Testis (tissue), 5 donors: ENCODE measurements at regions of chr2 and their contacts with region 1.

Region 1: DNA sequence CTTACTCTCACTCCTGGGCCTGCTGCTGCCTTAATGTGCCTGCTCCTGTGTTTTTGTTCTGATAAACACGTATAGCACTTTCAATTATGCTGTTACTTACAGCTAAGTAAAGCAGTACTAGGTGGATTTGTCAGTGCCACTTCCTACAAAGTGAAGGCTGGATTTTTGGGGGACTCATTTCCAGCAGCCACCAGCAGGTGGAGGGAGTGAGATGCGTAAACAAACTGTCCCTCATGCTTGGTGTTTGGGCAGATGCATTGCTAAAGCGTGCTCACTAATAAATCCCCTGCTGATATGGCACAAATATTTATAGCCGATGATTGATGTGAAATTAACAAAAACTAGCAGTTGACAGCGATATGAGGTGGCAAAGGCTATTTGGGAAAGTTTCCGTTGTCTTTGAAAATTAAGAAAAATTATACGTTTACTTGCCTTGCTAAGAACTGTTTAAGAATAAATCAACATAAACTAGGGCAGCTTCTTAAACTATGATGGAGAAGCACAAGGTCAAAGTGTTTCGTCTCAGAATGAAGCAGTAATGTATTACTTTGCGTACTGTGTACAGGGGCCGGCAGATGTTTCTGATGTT is 101.7 kb downstream of the AGAP1 start:
- DNase-seq: peak; percentile 81
- H3K4me3 ChIP-seq: no peak overlapping the region
- H3K27ac ChIP-seq: no peak overlapping the region
- H3K4me1 ChIP-seq: no peaks in the 10 kb centered on the region
- H3K27me3 ChIP-seq: no peaks in the 10 kb centered on the region
- CTCF ChIP-seq: peak; percentile 84 to 89 (median 89)
- POLR2A ChIP-seq: no peak

Region 2: DNA sequence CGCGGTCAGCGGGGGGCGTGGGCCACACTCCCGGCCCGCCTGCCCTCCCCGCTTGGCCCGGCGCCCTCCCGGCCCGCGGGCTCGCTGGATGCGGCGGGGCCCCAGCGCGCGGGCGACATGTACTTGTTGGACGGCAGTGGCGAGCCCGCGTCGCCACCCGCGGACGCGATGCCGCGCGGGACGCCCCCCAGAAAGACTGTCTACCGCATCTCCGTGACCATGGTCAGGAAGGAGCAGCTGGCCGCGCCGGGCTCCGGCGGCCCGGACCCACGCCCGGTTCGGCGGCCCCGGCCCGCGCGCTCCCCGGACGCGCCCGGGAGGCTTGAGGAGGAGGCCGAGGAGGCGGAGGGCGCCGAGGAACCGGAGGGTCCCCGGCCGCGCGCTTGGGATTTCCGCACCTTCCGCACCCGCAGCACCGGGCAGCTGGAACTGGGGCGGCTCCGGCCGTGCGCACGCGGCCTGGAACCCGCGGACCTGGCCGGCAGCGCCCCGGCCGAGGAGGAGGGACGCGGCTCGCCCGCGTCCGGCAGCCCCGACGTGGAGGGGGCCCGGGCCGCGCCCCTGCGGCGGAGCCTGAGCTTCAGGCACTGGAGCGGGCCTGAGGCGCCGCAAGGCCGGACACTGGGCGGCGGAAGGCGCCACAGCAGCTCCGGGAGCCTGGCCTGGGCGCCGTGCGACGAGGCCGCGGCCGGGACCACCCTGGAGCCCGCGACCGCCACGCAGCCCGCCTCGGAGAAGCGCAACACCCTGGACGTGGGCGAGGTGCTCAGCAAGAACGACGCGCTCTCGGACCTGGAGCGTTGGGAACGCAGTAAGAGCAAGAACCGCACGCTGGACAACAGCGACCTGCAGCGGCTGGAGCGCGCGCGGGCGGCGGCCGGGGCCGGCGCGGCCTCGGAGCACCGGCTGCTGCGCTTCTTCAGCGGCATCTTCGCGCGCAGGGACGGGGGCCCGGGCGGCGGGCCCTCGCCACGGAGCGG is 74.8 kb after region 1 on chr2:
- intact Hi-C with region 1: loop called (anchors 5 kb)
- DNase-seq: peak; percentile 79
- H3K4me3 ChIP-seq: peak overlapping the region; percentile 30 to 51
- H3K27ac ChIP-seq: no peak overlapping the region
- H3K4me1 ChIP-seq: peaks cover 4% of the 10 kb centered on the region
- H3K27me3 ChIP-seq: no peaks in the 10 kb centered on the region
- CTCF ChIP-seq: peak; percentile 30 to 63 (median 31)
- POLR2A ChIP-seq: no peak

Region 3: GRCh38 chr2:235740821-235741220 is 145.3 kb after region 1 on chr2:
- intact Hi-C with region 1: loop called (anchors 5 kb)
- DNase-seq: no peak
- H3K4me3 ChIP-seq: no peak overlapping the region
- H3K27ac ChIP-seq: no peak overlapping the region
- H3K4me1 ChIP-seq: no peaks in the 10 kb centered on the region
- H3K27me3 ChIP-seq: no peaks in the 10 kb centered on the region
- CTCF ChIP-seq: no peak
- POLR2A ChIP-seq: no peak